ENCODE measurements at regions of chr3 and their contacts with region 1.

Region 1: GRCh38 chr3:40971191-40972168 is 227.8 kb upstream of the CTNNB1 start:
- DNase-seq: peak; percentile 69
- ATAC-seq: peak; percentile 91

Region 2: DNA sequence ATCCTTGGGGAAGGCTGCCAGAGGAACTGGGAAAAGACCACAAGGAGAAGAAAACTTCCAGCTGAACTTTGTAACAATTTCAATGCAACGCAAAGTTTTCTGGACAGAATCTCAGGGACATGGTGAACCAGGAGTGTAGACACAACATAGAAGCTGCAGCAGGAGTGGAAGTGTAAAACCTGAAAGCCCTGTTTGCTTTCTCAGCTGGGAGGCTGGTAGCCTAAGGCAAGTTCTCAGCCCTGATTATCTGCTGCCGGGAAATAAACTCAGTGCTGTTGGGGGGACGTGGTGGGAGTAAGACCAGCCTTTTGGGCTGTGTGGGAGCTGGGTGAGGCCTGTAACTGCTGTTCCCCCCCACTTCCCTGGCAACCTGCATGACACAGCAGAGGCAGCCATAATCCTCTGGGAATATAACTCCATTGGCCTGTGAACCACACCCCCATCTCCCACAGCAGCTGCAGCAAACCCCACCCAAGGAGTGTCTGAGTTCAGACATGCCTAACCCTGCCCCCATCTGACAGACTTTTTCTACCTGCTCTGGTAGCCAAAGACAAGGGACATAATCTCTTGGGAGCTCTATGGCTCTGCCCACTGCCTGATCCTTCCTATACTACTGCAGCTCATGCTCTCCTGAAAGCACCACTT is 340.0 kb before region 1 on chr3:
- intact Hi-C with region 1: no loop called
- DNase-seq: no peak
- ATAC-seq: no peak

Region 3: DNA sequence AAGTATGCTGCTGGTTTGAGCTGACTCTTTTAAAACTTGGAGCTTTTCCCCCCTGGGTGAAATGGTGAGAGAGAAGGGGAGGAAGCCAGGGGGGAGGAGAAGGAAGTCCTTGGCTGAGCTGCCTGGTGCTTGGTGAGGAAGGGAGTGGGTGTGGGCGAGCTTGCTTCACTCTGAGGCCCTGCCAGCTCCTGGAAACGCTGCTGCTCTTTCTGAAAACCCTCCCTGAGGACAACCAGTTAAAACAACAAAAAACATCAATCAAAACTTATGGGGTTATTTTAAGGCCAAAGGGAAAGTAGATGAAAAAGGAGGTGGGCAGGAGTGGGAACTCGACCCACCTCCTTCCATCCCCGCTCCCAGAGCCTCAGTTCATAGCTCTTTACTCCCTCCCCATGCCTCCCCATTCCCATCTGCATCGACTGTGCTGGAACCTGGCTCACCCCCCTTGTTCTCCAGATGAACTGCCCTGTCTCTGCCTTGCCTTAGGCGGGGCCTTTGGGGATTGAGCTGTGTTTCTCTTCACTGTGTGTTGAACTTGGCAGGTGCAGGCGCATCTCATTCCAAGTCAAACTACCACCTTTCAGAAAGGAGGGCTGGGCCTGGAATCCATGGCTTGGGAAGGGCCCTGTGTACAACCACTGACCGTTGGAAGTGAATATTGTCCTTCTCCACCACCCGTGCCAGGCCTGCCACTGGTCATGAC is 280.6 kb before region 1 on chr3:
- intact Hi-C with region 1: no loop called
- DNase-seq: peak; percentile 89
- ATAC-seq: peak; percentile 92

Region 4: GRCh38 chr3:41198950-41199865 is 227.7 kb after region 1 on chr3 and contains the start of gene CTNNB1:
- intact Hi-C with region 1: loop called (anchors 10 kb)
- DNase-seq: peak; percentile 96
- ATAC-seq: peak; percentile 96
- total RNA-seq, gene CTNNB1: 152 TPM